ENCODE measurements at regions of chr5 and their contacts with region 1.

Region 1: GRCh38 chr5:134917070-134917815 is 12.3 kb downstream of the PCBD2 start:
- DNase-seq: peak; percentile 18
- ATAC-seq: peak; percentile 87
- H3K4me3 ChIP-seq: no peak overlapping the region
- H3K27ac ChIP-seq: no peak overlapping the region
- H3K4me1 ChIP-seq: peaks cover 23% of the 10 kb centered on the region
- H3K27me3 ChIP-seq: no peaks in the 10 kb centered on the region
- CTCF ChIP-seq: peak; percentile 81
- EP300 ChIP-seq: no peak
- POLR2A ChIP-seq: no peak
- RAD21 ChIP-seq: peak; percentile 44; the same call in 1 of the 2 replicates

Region 2: GRCh38 chr5:134887593-134888159 is 29.6 kb before region 1 on chr5:
- CTCF ChIA-PET with region 1: no interaction called
- POLR2A ChIA-PET with region 1: no interaction called
- in situ Hi-C with region 1: no loop called
- intact Hi-C with region 1: no loop called
- DNase-seq: no peak
- ATAC-seq: no peak; the same call in 2 of the 3 replicates
- H3K4me3 ChIP-seq: no peak overlapping the region
- H3K27ac ChIP-seq: no peak overlapping the region
- H3K4me1 ChIP-seq: peaks cover 7% of the 10 kb centered on the region; the same call in 1 of the 2 replicates
- H3K27me3 ChIP-seq: no peaks in the 10 kb centered on the region
- CTCF ChIP-seq: no peak
- EP300 ChIP-seq: no peak
- POLR2A ChIP-seq: no peak
- RAD21 ChIP-seq: no peak

Region 3: GRCh38 chr5:134964359-134965270 is 47.4 kb after region 1 on chr5:
- CTCF ChIA-PET with region 1: no interaction called
- POLR2A ChIA-PET with region 1: interaction called, 4 read pairs
- in situ Hi-C with region 1: no loop called
- intact Hi-C with region 1: loop called (anchors 2 kb)
- DNase-seq: peak; percentile 92
- ATAC-seq: peak; percentile 83
- H3K4me3 ChIP-seq: peak overlapping the region in 2 of 3 experiments; percentile 10 to 35; a peak in 3 of 6 replicates
- H3K27ac ChIP-seq: peak overlapping the region; percentile 65
- H3K4me1 ChIP-seq: peaks cover 35% of the 10 kb centered on the region
- H3K27me3 ChIP-seq: no peaks in the 10 kb centered on the region
- CTCF ChIP-seq: no peak
- EP300 ChIP-seq: peak in 1 of 2 experiments; percentile 91; a peak in 2 of 4 replicates
- POLR2A ChIP-seq: no peak
- RAD21 ChIP-seq: no peak

Region 4: DNA sequence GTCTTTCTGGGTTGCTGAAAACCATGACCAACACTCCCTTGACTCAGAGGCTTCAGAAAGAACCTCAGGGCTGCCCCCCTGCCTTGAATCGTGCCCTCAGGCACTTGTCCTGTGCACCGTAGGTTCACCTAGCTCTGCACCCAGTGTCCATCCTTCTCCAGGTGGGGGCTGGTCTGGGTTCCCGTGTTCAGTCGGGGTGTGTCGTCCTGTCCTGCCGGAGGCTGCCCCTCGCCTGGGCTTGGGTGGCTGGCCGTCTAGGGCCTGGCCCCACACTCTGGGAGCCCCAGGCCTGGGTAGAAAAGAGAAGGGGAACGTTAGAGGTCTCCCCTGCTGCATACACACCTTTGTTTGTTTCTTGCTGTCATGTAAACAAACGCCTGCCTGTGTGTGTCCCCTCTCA is 79.8 kb after region 1 on chr5:
- CTCF ChIA-PET with region 1: no interaction called
- POLR2A ChIA-PET with region 1: no interaction called
- in situ Hi-C with region 1: no loop called
- intact Hi-C with region 1: no loop called
- DNase-seq: no peak
- ATAC-seq: no peak
- H3K4me3 ChIP-seq: no peak overlapping the region
- H3K27ac ChIP-seq: no peak overlapping the region
- H3K4me1 ChIP-seq: no peaks in the 10 kb centered on the region
- H3K27me3 ChIP-seq: no peaks in the 10 kb centered on the region
- CTCF ChIP-seq: no peak
- EP300 ChIP-seq: no peak
- POLR2A ChIP-seq: no peak
- RAD21 ChIP-seq: no peak

Region 5: GRCh38 chr5:135013947-135014570 is 96.8 kb after region 1 on chr5:
- CTCF ChIA-PET with region 1: no interaction called
- POLR2A ChIA-PET with region 1: no interaction called
- in situ Hi-C with region 1: no loop called
- intact Hi-C with region 1: no loop called
- DNase-seq: peak; percentile 23
- ATAC-seq: peak; percentile 39; the same call in 2 of the 3 replicates
- H3K4me3 ChIP-seq: no peak overlapping the region
- H3K27ac ChIP-seq: no peak overlapping the region
- H3K4me1 ChIP-seq: peaks cover 14% of the 10 kb centered on the region
- H3K27me3 ChIP-seq: no peaks in the 10 kb centered on the region
- CTCF ChIP-seq: no peak
- EP300 ChIP-seq: no peak
- POLR2A ChIP-seq: no peak
- RAD21 ChIP-seq: no peak

Region 6: DNA sequence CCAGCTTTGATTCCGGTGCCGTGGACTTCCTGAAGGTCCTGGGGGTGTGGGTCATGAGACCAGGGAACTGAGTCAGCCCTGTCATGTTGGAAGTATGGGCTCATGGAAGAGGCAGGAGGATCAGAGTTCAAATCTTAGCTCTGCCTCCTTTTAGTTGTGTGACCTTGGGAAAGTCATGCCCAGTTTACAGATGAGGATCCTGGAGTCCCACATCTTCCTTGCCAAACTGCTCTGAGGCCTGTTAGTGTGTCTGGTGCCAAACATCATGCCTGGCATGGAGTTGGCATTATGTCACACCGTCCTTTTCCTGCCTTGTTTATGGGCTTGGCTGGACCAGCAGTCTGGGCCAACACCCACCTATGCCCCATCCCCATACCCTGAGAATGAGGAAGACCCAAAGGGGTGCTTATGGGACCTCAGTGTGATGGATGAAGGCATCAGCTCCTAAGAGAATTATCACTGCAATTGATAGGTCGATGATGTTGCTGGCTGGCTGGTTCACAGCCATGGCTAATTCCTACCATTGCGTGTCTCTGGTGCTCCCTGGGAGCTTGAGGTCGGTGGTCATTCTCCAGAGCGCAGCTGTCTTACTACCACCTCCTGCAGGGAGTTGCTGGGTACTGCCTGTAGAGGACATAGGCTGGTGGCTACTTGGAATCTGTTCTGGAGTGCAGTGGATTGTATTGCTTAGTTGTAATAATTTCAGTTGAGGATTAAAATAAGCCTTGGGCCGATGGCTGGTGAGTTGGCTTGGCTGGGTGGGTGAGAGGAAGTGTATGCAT is 257.3 kb after region 1 on chr5:
- CTCF ChIA-PET with region 1: no interaction called
- POLR2A ChIA-PET with region 1: no interaction called
- in situ Hi-C with region 1: no loop called
- intact Hi-C with region 1: no loop called
- DNase-seq: no peak
- ATAC-seq: peak; percentile 52
- H3K4me3 ChIP-seq: no peak overlapping the region
- H3K27ac ChIP-seq: no peak overlapping the region
- H3K4me1 ChIP-seq: peaks cover 18% of the 10 kb centered on the region
- H3K27me3 ChIP-seq: no peaks in the 10 kb centered on the region
- CTCF ChIP-seq: peak; percentile 52
- EP300 ChIP-seq: no peak
- POLR2A ChIP-seq: no peak
- RAD21 ChIP-seq: peak; percentile 18; the same call in 1 of the 2 replicates

Region 7: DNA sequence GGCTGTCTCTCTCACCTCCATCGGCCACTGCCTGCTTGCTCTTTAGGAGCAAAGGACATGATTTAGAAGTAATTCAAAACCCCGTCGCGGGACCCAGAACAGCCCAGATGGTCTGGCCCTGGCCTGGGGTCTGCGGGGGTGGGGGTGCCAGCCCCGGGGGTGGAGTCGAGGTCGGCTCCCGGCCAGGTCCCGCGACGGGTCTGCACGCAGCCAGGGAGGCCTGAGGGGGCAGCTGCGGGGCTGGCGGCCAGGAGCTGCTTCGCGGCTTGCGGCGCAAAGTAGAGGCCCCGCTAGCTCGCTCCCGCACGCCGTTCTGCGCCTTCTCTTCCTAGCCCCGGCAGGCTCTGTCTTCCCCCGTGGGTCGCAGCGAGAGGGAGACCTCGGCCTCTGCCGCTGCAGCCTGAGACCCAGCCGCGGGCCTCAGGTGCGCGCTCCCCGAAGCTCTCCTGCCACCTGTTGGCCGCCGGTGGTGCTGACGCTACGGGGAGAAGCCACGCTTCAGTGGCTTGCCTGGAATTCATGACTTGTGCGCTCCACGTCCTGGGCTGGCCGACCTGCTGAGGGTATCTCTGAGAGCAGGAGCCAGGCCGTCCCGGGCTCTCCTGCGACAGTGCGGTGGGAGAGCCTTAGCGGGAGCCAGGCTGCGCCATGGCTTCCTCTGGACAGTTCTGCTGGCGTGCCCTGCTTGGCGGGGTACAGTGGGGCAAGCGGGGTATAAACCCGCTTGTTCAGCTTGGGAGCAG is 274.0 kb after region 1 on chr5:
- CTCF ChIA-PET with region 1: interaction called, 21 read pairs
- POLR2A ChIA-PET with region 1: interaction called, 10 read pairs
- in situ Hi-C with region 1: loop called (anchors 5 kb)
- intact Hi-C with region 1: loop called (anchors 1 kb)
- DNase-seq: peak; percentile 68
- ATAC-seq: peak; percentile 98
- H3K4me3 ChIP-seq: peak overlapping the region; percentile 72 to 82 (median 76)
- H3K27ac ChIP-seq: no peak overlapping the region
- H3K4me1 ChIP-seq: peaks cover 5% of the 10 kb centered on the region; the same call in 1 of the 2 replicates
- H3K27me3 ChIP-seq: no peaks in the 10 kb centered on the region; a peak in 1 of 5 replicates
- CTCF ChIP-seq: peak; percentile 100
- EP300 ChIP-seq: no peak
- POLR2A ChIP-seq: peak in 1 of 2 experiments; percentile 44; a peak in 1 of 4 replicates
- RAD21 ChIP-seq: peak; percentile 99

Region 8: GRCh38 chr5:135203593-135204036 is 286.4 kb after region 1 on chr5:
- CTCF ChIA-PET with region 1: interaction called, 13 read pairs
- POLR2A ChIA-PET with region 1: no interaction called
- in situ Hi-C with region 1: no loop called
- intact Hi-C with region 1: no loop called
- DNase-seq: peak; percentile 45
- ATAC-seq: no peak; the same call in 2 of the 3 replicates
- H3K4me3 ChIP-seq: no peak overlapping the region
- H3K27ac ChIP-seq: no peak overlapping the region
- H3K4me1 ChIP-seq: peaks cover 12% of the 10 kb centered on the region
- H3K27me3 ChIP-seq: no peaks in the 10 kb centered on the region
- CTCF ChIP-seq: peak; percentile 41
- EP300 ChIP-seq: no peak
- POLR2A ChIP-seq: no peak
- RAD21 ChIP-seq: no peak